PC-3 (cell line): ENCODE measurements at regions of chr6 and their contacts with region 1.

Region 1: GRCh38 chr6:32838114-32838958 is at the start of gene TAP2:
- DNase-seq: peak; percentile 94
- ATAC-seq: peak; percentile 96
- H3K4me3 ChIP-seq: peak within 1 kb of the TSS; percentile 96
- H3K27ac ChIP-seq: peak within 1 kb of the TSS; percentile 54; the same call in 1 of the 2 replicates
- H3K4me1 ChIP-seq: peaks cover 24% of the 10 kb centered on the region
- H3K27me3 ChIP-seq: no peaks in the 10 kb centered on the region
- CTCF ChIP-seq: peak; percentile 94
- total RNA-seq, gene TAP2: 90.5 and 93.0 TPM in 2 replicates

Region 2: GRCh38 chr6:32825966-32826365 is 12.4 kb before region 1 on chr6:
- CTCF ChIA-PET with region 1: interaction called, 10 read pairs
- POLR2A ChIA-PET with region 1: interaction called, 5 read pairs
- intact Hi-C with region 1: no loop called
- DNase-seq: peak; percentile 54
- ATAC-seq: peak; percentile 77
- H3K4me3 ChIP-seq: no peak overlapping the region
- H3K27ac ChIP-seq: no peak overlapping the region
- H3K4me1 ChIP-seq: no peaks in the 10 kb centered on the region
- H3K27me3 ChIP-seq: no peaks in the 10 kb centered on the region
- CTCF ChIP-seq: peak; percentile 60

Region 3: GRCh38 chr6:32853541-32854375 is 15.4 kb after region 1 on chr6 and contains the starts of genes PSMB9 and TAP1:
- CTCF ChIA-PET with region 1: interaction called, 83 read pairs
- POLR2A ChIA-PET with region 1: interaction called, 12 read pairs
- intact Hi-C with region 1: loop called (anchors 1 kb)
- DNase-seq: peak; percentile 95
- ATAC-seq: peak; percentile 87
- H3K4me3 ChIP-seq: peak within 1 kb of the TSS; percentile 83
- H3K27ac ChIP-seq: peak within 1 kb of the TSS; percentile 72
- H3K4me1 ChIP-seq: peaks cover 7% of the 10 kb centered on the region
- H3K27me3 ChIP-seq: no peaks in the 10 kb centered on the region
- CTCF ChIP-seq: peak; percentile 75
- total RNA-seq, gene PSMB9: 0.40 and 1.5 TPM in 2 replicates
- total RNA-seq, gene TAP1: 15.8 and 19.4 TPM in 2 replicates

Region 4: DNA sequence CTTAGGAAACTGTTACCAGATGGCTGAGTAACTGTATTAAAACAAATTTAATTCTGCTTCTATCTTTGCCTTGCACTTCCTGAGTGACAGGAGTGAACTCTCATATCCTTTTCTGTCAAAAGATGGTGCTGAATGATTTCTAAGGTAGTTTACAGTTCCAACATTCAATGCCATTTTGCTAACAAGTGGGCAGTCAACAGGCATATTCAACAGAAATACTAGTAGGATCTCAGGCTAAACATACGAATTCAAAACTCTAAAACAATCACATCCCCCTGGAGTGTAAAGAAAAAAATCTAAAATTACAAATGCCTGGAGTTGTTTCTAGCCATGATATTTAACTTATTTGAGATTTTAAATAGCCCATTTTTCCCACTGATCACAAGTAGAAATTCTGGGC is 22.3 kb after region 1 on chr6:
- CTCF ChIA-PET with region 1: interaction called, 18 read pairs
- POLR2A ChIA-PET with region 1: no interaction called
- intact Hi-C with region 1: loop called (anchors 1 kb)
- DNase-seq: no peak
- ATAC-seq: no peak
- H3K4me3 ChIP-seq: no peak overlapping the region
- H3K27ac ChIP-seq: no peak overlapping the region
- H3K4me1 ChIP-seq: peaks cover 6% of the 10 kb centered on the region; the same call in 1 of the 2 replicates
- H3K27me3 ChIP-seq: no peaks in the 10 kb centered on the region
- CTCF ChIP-seq: no peak

Region 5: GRCh38 chr6:32868257-32868788 is 30.0 kb after region 1 on chr6:
- CTCF ChIA-PET with region 1: interaction called, 90 read pairs
- POLR2A ChIA-PET with region 1: interaction called, 7 read pairs
- intact Hi-C with region 1: loop called (anchors 1 kb)
- DNase-seq: peak; percentile 87
- ATAC-seq: peak; percentile 71
- H3K4me3 ChIP-seq: no peak overlapping the region
- H3K27ac ChIP-seq: no peak overlapping the region
- H3K4me1 ChIP-seq: no peaks in the 10 kb centered on the region
- H3K27me3 ChIP-seq: peaks cover 14% of the 10 kb centered on the region
- CTCF ChIP-seq: peak; percentile 97

Region 6: DNA sequence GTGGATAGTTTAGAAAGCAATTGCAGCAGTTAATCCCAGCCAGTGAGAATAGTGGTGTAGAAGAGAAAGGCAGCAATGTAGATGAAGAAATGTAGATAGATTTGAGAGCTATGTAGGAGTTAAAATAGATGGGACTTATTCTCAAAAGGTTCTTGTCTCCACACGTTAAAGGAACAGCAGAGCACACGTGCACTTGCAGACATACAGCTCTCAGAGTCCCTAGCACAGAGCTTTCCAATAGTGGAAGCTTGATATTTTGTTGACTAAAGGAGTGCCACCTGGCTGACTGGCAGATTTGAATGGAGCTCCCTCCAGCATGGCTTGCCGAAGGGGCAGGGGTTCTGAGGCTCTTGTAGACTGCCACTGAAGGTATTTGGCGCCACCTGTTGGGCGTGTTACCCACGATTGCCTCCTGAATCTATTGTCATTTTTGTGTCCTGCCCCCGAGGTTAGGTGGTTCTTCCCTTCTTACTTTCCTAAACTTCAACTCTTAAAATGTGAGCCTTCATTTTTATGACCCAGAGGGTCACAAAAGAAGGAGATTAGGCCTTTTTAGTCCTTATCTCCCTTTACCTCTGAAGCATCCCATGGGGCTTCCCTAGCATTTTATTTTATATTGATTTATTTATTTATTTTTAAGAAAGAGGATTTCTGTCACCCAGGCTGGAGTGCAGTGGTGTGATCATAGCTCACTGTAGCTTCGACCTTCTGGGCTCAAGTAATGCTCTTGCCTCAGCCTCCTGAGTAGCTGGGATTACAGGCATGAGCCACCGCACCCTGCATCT is 146.5 kb after region 1 on chr6:
- CTCF ChIA-PET with region 1: interaction called, 11 read pairs
- POLR2A ChIA-PET with region 1: no interaction called
- intact Hi-C with region 1: loop called (anchors 5 kb)
- DNase-seq: peak; percentile 95
- ATAC-seq: peak; percentile 95
- H3K4me3 ChIP-seq: no peak overlapping the region
- H3K27ac ChIP-seq: no peak overlapping the region
- H3K4me1 ChIP-seq: peaks cover 8% of the 10 kb centered on the region; the same call in 1 of the 2 replicates
- H3K27me3 ChIP-seq: no peaks in the 10 kb centered on the region
- CTCF ChIP-seq: peak; percentile 94

Region 7: DNA sequence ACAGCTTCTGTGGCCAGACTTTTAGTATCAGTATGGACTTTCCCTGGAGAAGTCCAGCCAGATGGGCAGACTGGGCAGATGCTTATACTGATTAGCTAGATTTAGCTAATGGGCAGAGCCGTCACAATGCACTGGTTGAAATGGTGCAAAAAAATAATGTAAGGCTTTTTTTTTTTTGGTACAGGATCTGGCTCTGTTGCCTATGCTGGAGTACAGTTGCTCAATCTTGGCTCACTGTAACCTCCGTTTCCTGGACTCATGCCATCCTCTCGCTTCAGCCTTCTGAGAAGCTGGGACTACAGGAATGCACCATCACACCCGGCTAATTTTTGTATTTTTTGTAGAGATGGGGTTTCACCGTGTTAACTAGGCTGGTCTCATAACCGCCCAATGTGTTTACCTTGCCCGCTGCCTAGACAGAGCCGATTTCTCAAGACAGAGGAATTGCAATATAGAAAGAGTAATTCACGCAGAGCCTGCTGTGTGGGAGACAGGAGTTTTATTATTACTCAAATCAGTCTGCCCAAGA is 536.9 kb after region 1 on chr6:
- CTCF ChIA-PET with region 1: no interaction called
- POLR2A ChIA-PET with region 1: no interaction called
- intact Hi-C with region 1: no loop called
- DNase-seq: peak; percentile 70
- ATAC-seq: peak; percentile 56
- H3K4me3 ChIP-seq: no peak overlapping the region
- H3K27ac ChIP-seq: no peak overlapping the region
- H3K4me1 ChIP-seq: peaks cover 8% of the 10 kb centered on the region; the same call in 1 of the 2 replicates
- H3K27me3 ChIP-seq: no peaks in the 10 kb centered on the region
- CTCF ChIP-seq: no peak